Aorta (tissue), 5 donors: ENCODE measurements at regions of chr18 and their contacts with region 1.

Region 1: DNA sequence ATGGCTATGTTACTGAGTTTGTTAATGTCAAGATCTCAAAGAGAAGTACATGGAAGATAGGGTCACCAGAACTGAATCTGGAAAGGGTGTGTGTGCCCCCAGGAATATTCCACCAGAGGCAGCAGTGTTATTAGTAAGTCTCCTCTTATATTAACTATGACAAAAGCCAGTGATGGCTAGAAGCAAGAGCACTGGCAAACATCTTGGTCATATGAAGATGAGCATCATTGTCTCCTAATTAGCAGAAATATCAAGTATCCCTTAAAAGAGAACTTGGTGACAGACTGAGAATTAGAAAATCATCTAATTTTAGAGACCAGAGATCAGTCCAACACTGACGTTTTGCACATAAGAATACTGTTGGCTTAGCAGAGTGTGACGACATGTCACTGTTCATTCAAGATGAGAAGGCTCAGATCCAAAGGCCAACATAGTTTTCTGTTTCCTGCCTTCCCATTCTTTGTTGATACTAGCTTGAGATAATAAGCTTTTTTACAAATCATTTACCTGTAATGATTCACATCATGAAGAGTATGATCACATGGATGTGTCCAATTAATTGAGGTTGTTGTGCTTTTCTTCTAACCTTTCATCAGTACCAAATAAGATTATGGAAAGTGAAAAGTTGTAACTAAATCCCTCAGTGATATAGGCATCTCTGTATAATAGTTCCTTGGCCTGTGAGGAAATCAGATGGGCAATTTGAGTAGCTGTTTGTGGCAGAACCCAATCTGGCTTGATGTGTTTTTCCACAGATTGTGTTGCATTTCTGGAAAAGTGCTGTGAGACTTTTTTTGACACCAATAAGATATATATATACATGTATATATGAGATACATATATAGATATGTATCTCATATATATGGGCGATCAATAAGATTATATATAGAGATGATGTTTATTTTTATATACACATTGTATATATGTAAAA is 44.5 kb downstream of the MAPRE2 start:
- DNase-seq: no peak
- ATAC-seq: no peak
- H3K4me3 ChIP-seq: no peak overlapping the region
- H3K27ac ChIP-seq: no peak overlapping the region
- H3K4me1 ChIP-seq: peaks cover 5 to 17% of the 10 kb centered on the region in 2 donors
- H3K27me3 ChIP-seq: no peaks in the 10 kb centered on the region

Region 2: DNA sequence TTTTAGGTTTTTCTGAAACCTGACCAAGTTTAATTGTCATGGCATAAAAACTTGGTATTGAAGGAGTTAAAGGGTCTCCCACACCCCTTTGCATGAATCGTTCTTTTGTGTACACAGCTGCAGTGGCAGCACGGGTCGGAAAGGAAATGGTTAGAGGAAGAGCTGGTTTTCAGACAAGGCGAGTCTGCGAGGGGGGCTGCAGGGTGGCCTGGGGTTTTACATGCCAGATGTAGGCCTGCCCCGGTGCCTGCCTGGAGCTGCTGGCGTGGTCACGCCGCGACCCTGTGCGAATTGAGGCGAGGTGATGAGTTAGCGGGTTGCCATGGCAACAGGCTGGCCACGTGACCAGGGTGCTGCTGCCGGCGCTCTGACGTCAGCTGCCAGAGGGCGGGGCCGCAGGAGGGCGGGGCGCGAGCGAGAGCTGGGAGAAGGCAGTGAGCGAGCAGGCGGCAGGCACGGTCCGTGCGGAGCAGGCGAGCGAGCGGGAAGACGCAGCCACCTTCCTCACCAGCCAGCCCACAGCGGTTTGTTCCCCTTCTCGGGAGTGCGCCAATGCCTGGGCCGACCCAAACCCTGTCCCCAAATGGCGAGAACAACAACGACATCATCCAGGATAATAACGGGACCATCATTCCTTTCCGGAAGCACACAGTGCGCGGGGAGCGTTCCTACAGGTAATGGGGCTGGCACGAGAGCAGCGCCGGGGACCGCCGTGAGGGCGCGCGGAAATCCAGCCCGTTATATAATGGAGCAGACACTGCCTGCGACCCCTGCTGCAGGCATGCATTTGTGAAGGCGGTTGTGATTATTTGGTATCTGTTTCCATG is 44.5 kb before region 1 on chr18 and contains the start of gene MAPRE2:
- intact Hi-C with region 1: loop called in 1 of 2 experiments (anchors 5 kb)
- DNase-seq: peak; percentile 100
- ATAC-seq: peak; percentile 99
- H3K4me3 ChIP-seq: peak within 1 kb of the TSS; percentile 65 to 82
- H3K27ac ChIP-seq: peak within 1 kb of the TSS in 1 of 2 donors; percentile 90
- H3K4me1 ChIP-seq: peaks cover 0 to 4% of the 10 kb centered on the region in 2 donors
- H3K27me3 ChIP-seq: no peaks in the 10 kb centered on the region
- total RNA-seq, gene MAPRE2: 52.7 to 71.9 TPM

Region 3: GRCh38 chr18:35067454-35067853 is 18.3 kb before region 1 on chr18:
- intact Hi-C with region 1: loop called in 1 of 2 experiments (anchors 2 kb)
- DNase-seq: no peak
- ATAC-seq: no peak
- H3K4me3 ChIP-seq: no peak overlapping the region
- H3K27ac ChIP-seq: no peak overlapping the region
- H3K4me1 ChIP-seq: peaks cover 0 to 5% of the 10 kb centered on the region in 2 donors
- H3K27me3 ChIP-seq: no peaks in the 10 kb centered on the region